Dendritic cell treated with granulocyte-macrophage colony-stimulating factor and Interleukin-4, amounts not matched to agents 40 ng/mL and 50 ng/mL, for 4 days (primary cell): ENCODE measurements at regions of chr19 and their contacts with region 1.

Region 1: DNA sequence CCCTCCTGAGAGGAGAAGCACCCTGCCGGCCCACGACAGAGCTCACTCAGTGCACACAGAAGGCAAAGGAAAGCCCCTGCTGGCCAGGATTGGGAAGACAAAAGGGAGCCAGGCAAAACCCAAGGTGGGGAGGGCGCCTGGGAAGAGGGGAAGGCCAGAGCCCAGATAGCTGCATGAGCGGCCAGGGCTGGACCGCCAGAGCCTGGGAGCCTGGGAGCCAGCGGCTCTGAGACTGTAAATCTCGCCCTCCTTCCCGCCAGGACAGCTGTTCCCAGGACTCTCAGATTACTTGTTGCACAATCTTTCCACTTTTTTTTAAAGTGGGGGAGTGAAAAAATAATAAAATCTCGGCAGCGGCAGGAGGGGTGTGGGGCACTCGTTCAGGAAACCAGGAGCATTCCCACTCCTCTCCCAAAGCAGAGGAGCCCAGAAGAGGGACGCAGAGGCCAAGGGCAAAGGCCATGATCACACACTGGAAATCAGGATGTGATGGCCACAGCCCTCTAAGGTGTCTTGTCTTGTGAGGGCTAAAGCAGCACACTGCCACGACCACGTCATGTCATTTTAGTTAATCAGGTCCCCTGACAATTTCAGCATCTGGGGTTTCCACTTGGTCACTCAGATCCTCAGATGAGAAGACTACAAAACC is 19.6 kb upstream of the EPHX3 start:
- H3K4me3 Mint-ChIP-seq: no peak overlapping the region
- H3K27ac Mint-ChIP-seq: no peak overlapping the region
- H3K4me1 Mint-ChIP-seq: peaks cover 5% of the 10 kb centered on the region
- H3K27me3 Mint-ChIP-seq: no peaks in the 10 kb centered on the region

Region 2: DNA sequence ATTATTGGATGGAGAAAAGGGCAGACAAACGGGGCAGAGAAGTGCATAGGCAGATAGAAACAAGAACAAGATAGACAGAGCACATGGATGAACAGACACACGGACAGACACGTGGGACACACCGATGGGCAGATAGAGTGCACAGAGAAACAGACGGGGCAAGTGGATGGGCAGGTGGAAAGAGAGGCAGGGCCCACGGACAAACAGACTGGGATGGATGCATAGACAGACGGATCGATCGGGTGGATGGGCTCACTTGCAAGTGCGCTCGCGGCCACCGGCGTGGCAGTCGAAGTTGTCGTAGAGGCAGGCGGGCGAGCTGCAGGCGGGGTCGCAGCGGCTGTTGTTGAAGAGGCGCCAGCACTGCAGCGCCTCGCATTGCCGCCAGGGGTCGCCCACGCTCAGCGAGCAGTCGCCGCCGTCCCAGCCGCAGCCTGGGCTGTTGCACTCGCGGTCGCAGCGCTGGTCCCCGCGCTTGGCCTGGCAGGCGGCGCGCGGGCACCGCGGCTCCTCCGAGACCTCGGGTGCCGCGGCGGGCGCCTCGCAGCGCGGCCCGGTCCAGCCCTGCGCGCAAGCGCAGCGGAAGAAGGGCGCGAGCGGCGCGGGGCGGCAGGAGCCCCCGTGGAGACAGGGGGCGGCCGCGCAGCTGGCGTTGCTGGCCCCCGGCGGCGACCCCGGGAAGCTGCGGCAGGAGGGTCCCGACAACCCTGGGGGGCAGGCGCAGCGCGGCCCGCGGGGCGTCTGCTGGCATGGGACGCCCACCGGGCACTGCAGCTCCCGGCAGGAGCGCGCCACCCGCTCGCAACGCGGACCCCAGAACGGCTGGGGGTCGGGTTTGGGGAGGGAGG is 74.4 kb before region 1 on chr19:
- intact Hi-C with region 1: loop called (anchors 2 kb)
- H3K4me3 Mint-ChIP-seq: peak overlapping the region; percentile 18
- H3K27ac Mint-ChIP-seq: no peak overlapping the region
- H3K4me1 Mint-ChIP-seq: peaks cover 18% of the 10 kb centered on the region
- H3K27me3 Mint-ChIP-seq: peaks cover 43% of the 10 kb centered on the region

Region 3: DNA sequence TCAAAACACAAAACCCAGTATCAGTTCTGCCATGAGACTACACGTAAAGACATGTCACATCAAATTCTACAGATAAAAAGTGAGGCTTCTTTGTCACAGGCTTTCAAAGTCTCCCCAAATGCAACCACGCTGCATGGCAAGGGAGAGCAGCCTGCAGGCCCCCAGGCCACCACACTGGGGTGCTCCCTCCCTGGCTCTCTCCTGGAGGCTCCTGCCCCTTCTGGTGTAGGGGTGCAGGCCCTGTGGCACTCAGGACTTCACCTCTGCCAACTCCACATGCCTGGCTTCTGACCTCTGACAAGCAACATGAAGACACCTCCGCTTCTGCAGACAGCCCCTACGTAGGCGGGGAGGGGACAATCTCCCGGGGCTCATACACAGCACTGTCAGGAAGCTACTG is 113.4 kb after region 1 on chr19:
- intact Hi-C with region 1: no loop called
- H3K4me3 Mint-ChIP-seq: no peak overlapping the region
- H3K27ac Mint-ChIP-seq: no peak overlapping the region
- H3K4me1 Mint-ChIP-seq: no peaks in the 10 kb centered on the region
- H3K27me3 Mint-ChIP-seq: no peaks in the 10 kb centered on the region